Psoas muscle (tissue), 8 donors: ENCODE measurements at regions of chr1 and their contacts with region 1.

Region 1: GRCh38 chr1:154589780-154590179 is 18.2 kb downstream of the ADAR start:
- DNase-seq: no peak
- ATAC-seq: no peak
- H3K4me3 ChIP-seq: no peak overlapping the region
- H3K27ac ChIP-seq: no peak overlapping the region
- H3K4me1 ChIP-seq: no peaks in the 10 kb centered on the region
- H3K27me3 ChIP-seq: no peaks in the 10 kb centered on the region
- CTCF ChIP-seq: no peak

Region 2: DNA sequence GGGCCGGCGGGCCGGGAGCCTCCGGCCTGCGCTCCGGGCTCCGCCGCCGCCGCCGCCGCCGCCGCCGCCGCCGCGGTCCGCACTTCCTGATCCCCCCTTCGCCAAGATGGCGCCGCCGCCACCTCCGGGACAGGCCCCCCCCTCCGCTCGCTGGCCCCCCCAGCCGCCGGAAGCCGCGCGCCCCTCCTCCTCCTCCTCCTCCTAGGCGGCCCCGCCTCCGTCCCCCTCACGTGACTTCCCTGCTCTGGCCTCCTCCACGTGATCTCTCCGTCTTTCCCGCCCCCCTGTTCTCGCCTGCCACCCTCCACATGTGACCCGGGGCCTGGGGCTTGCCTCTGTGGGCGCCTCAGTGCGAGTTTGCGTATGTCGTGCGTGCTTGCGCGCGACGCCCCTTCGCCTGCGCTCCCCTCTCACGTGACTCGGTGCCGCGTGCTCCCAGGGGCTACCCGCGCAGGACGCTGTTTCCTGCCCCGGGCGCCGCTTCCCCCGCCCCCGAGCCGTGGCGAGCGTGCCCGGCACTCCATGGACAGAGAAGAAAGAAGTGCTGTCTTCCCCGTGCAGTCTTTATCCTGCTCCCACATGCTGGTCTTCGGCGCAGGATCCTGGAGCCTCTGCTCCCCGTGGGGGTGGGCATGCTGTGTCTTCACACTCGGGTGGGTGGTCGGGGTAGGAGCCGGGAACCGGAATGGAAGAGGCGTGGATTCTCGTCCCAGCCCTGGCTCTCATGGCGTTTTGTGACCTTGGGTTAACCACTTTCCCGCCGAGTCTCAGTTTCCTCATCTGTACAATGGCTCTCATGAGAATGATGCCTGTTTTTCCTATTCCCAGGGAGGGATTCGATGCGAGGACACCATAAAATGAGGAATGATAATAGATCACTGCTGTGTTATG is 31.0 kb before region 1 on chr1 and contains the start of gene UBE2Q1:
- intact Hi-C with region 1: no loop called
- DNase-seq: peak; percentile 99 to 100
- ATAC-seq: peak; percentile 95 to 97 (median 96)
- H3K4me3 ChIP-seq: peak within 1 kb of the TSS; percentile 91
- H3K27ac ChIP-seq: peak within 1 kb of the TSS; percentile 97
- H3K4me1 ChIP-seq: peaks cover 35% of the 10 kb centered on the region
- H3K27me3 ChIP-seq: no peaks in the 10 kb centered on the region
- CTCF ChIP-seq: no peak
- total RNA-seq, gene UBE2Q1: 43.1 to 65.5 (median 54.8) TPM

Region 3: GRCh38 chr1:154574716-154575115 is 15.1 kb before region 1 on chr1:
- intact Hi-C with region 1: loop called in 1 of 2 experiments (anchors 1 kb)
- DNase-seq: no peak
- ATAC-seq: no peak
- H3K4me3 ChIP-seq: no peak overlapping the region
- H3K27ac ChIP-seq: no peak overlapping the region
- H3K4me1 ChIP-seq: no peaks in the 10 kb centered on the region
- H3K27me3 ChIP-seq: peaks cover 0 to 2% (median 0%) of the 10 kb centered on the region in 3 donors
- CTCF ChIP-seq: no peak

Region 4: DNA sequence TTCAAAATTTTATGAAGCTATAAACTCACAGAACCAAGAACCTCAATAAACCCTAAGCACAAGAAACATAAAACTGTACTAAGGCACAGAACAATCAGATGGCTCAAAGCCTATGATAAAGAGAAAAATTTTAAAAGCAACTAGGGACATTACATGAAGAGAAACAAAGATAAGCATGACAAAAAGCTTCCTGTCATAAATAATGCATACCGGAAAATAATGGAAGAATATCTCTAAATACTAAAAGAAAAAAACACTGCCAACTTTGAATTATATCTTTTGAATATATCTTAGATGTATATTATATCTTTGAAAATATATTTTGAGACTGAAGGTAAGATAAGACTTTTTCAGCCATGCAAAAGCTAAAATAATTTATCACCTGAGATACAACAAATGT is 301.7 kb after region 1 on chr1:
- intact Hi-C with region 1: loop called (anchors 5 kb)
- DNase-seq: no peak
- ATAC-seq: no peak
- H3K4me3 ChIP-seq: no peak overlapping the region
- H3K27ac ChIP-seq: no peak overlapping the region
- H3K4me1 ChIP-seq: no peaks in the 10 kb centered on the region
- H3K27me3 ChIP-seq: no peaks in the 10 kb centered on the region
- CTCF ChIP-seq: no peak